ENCODE measurements at regions of chr17 and their contacts with region 1.

Region 1: GRCh38 chr17:78360371-78361224 is 721 bp upstream of the SOCS3 start:
- DNase-seq: no peak
- ATAC-seq: peak; percentile 75
- H3K4me3 ChIP-seq: peak overlapping the region; percentile 81 to 82
- H3K27ac ChIP-seq: peak overlapping the region; percentile 70
- H3K4me1 ChIP-seq: peaks cover 44% of the 10 kb centered on the region
- H3K27me3 ChIP-seq: no peaks in the 10 kb centered on the region
- CTCF ChIP-seq: peak; percentile 98

Region 2: GRCh38 chr17:78284146-78284545 is 76.5 kb before region 1 on chr17:
- CTCF ChIA-PET with region 1: no interaction called
- POLR2A ChIA-PET with region 1: interaction called, 3 read pairs
- in situ Hi-C with region 1: no loop called
- intact Hi-C with region 1: loop called (anchors 5 kb)
- DNase-seq: no peak
- ATAC-seq: peak; percentile 36; the same call in 1 of the 2 replicates
- H3K4me3 ChIP-seq: no peak overlapping the region
- H3K27ac ChIP-seq: no peak overlapping the region
- H3K4me1 ChIP-seq: no peaks in the 10 kb centered on the region
- H3K27me3 ChIP-seq: no peaks in the 10 kb centered on the region
- CTCF ChIP-seq: no peak

Region 3: GRCh38 chr17:78337244-78338109 is 23.1 kb before region 1 on chr17:
- CTCF ChIA-PET with region 1: interaction called, 10 read pairs
- POLR2A ChIA-PET with region 1: interaction called, 12 read pairs
- in situ Hi-C with region 1: no loop called
- intact Hi-C with region 1: no loop called
- DNase-seq: no peak
- ATAC-seq: no peak
- H3K4me3 ChIP-seq: no peak overlapping the region
- H3K27ac ChIP-seq: peak overlapping the region; percentile 52; the same call in 1 of the 2 replicates
- H3K4me1 ChIP-seq: peaks cover 54% of the 10 kb centered on the region
- H3K27me3 ChIP-seq: no peaks in the 10 kb centered on the region
- CTCF ChIP-seq: no peak

Region 4: DNA sequence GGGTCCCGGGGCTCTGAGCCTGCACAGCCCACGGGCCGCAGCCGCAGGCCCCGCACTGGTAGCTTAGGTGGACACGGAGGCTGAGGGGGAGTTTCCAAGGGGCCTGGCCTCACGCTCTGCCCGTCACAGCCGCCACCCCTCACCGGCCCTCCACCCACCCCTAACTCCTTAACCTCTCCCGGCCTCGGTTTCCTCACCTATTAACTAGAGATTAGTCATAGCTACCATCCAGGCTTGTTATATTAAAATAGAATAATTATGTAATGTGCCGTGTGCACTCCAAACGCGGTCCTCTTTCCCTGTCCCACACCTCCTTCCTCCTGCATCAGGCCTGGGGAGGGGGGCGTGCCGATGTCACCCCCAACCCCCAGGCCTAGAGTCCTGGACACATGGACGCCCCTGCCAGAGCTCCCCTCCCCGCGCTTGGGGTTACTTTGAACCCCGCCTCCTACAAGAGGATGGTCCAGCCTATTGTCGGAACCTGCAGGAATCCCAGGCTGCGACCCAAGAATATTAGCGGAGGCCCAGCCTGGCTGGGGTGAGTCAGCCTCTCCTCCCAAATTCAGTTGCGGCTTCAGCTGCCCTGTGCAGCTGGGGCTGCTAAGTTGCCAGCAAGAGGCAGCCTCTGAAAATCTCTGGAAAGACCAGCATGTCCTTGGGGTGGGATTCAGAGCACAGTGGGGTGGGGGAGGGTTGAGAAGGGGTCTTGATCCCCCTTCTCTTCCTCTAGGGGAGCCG is 18.0 kb before region 1 on chr17:
- CTCF ChIA-PET with region 1: interaction called, 10 read pairs
- POLR2A ChIA-PET with region 1: no interaction called
- in situ Hi-C with region 1: no loop called
- intact Hi-C with region 1: no loop called
- DNase-seq: no peak
- ATAC-seq: peak; percentile 69
- H3K4me3 ChIP-seq: peak overlapping the region; percentile 41 to 47
- H3K27ac ChIP-seq: peak overlapping the region; percentile 90
- H3K4me1 ChIP-seq: peaks cover 54% of the 10 kb centered on the region
- H3K27me3 ChIP-seq: no peaks in the 10 kb centered on the region
- CTCF ChIP-seq: no peak

Region 5: DNA sequence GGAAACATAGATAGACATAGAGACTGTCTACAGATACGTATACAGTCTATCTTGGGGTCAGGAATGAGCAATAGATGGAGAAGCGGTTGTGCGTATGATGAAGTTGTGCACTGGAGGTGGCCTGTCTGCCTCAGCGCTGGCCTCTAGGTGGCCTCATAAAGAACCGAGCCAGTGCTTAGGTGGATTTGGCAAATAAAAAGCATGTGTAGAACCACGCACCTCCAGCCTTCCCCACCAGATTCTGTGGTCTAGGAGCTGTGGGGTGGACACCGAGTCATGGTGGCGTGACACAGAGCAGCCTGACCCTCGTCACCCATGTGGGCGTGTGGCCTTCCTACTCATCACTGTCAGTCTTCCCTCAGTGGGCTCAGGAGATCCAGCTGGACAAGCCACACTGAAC is 51.8 kb after region 1 on chr17:
- CTCF ChIA-PET with region 1: no interaction called
- POLR2A ChIA-PET with region 1: interaction called, 13 read pairs
- in situ Hi-C with region 1: no loop called
- intact Hi-C with region 1: no loop called
- DNase-seq: no peak
- ATAC-seq: peak; percentile 52; the same call in 1 of the 2 replicates
- H3K4me3 ChIP-seq: no peak overlapping the region
- H3K27ac ChIP-seq: no peak overlapping the region
- H3K4me1 ChIP-seq: 0 out of 2 replicates have a peak, but pooled peaks cover 5% of the 10 kb centered on the region
- H3K27me3 ChIP-seq: no peaks in the 10 kb centered on the region
- CTCF ChIP-seq: no peak; the same call in 1 of the 2 replicates

Region 6: DNA sequence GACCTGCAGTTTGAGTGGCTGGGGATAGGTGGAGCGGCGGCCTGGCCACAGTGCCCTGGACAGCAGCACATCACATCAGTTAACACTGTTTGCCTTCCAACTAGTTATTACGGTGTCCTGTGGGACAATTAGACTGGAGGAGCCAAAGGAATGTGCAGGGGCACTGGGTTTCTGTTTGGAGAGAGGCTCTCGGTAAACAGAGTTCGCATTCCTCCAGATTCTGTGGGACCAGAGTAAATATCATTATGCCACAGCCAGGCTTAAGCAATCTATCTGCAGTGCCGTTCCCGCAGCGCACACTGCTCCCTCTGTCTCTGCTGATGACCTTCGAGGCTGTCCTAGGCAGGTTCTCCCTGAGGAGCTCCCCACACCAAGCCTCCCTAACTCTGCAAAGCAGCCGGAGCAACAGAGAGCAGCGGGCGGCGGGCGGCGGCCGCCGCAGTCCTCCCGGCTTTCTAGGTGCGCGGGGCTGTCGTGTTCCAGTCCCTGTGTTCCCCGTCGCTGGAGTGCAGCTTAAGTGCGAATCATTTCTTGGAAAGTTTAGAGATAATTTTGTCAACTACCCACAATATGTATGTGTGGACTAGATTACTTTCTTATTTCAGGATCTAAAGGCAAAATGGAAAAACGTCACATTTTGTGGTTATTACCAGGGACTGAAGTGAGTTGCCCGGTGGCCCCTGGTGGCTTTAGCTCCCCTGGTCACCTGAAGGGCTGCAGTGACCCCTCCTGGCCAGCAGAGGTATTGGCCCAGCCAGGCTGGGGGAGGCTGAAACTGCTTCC is 61.1 kb after region 1 on chr17:
- CTCF ChIA-PET with region 1: interaction called, 18 read pairs
- POLR2A ChIA-PET with region 1: no interaction called
- in situ Hi-C with region 1: no loop called
- intact Hi-C with region 1: loop called (anchors 2 kb)
- DNase-seq: peak; percentile 51
- ATAC-seq: peak; percentile 88
- H3K4me3 ChIP-seq: no peak overlapping the region
- H3K27ac ChIP-seq: peak overlapping the region; percentile 6; the same call in 1 of the 2 replicates
- H3K4me1 ChIP-seq: peaks cover 12% of the 10 kb centered on the region; the same call in 1 of the 2 replicates
- H3K27me3 ChIP-seq: no peaks in the 10 kb centered on the region
- CTCF ChIP-seq: peak; percentile 99